Activated CD8-positive, alpha-beta memory T cell treated with anti-CD3 and anti-CD28 coated beads, Interleukin-2, amount 10 ng/mL, durations not matched to agents 7 days and 5 days (primary cell): ENCODE measurements at regions of chr17 and their contacts with region 1.

Region 1: DNA sequence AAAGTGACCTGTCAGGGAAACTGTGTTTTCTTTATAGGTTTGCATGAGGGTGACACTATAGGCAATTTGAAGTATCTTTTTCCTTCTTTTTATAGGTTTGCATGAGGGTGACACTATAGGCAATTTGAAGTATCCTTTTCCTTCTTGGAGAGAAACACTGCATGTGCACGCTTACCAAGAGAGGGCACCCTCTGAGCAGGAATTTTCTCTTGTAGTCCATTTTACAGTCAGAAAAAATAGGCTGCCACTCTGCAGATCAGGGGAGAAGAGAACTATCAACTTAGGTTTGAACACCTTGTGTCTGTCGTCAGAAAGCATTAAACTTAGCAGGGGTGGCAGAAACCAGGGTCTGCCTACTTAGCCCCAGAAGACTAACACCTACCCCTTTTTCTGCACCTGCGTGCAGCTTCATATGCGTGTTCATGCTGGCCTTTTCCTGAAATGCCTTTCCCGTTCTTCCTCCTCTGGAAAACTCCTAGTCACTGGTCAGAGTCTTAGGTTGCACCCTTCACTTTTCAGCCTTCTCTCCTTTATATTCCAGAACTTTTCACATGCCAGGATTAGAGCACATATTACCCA is 16.4 kb upstream of the SMIM36 start:
- DNase-seq: no peak
- ATAC-seq: no peak
- H3K4me3 Mint-ChIP-seq: no peak overlapping the region
- H3K27ac Mint-ChIP-seq: no peak overlapping the region
- H3K4me1 Mint-ChIP-seq: peaks cover 16% of the 10 kb centered on the region
- H3K27me3 Mint-ChIP-seq: peaks cover 27% of the 10 kb centered on the region

Region 2: DNA sequence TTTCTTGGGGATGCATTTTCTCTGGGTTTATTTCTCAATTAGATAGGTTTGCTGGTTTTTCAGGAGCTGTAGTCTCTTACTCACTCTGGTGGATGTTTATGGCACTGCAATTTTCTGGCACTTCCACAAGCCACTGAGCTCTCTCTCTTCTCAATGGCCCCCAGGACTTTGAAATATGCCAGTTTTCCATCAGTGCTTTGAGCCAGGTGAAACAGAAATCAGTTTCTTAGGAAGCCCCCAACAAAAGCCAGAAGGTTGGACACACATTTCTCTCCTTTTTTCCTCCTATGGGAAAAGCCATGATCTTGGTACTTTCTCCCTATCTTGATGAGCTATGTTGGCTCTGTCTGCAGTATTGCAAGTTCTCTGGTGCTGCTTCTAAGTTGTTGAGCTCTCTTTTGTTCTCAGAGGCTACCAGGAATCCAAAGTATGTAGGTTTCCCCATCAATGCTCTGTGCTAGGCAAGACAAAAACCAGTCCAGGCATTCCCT is 74.3 kb after region 1 on chr17:
- CTCF ChIA-PET with region 1: interaction called, 22 read pairs
- DNase-seq: no peak
- ATAC-seq: no peak
- H3K4me3 Mint-ChIP-seq: no peak overlapping the region
- H3K27ac Mint-ChIP-seq: no peak overlapping the region
- H3K4me1 Mint-ChIP-seq: no peaks in the 10 kb centered on the region
- H3K27me3 Mint-ChIP-seq: peaks cover 29% of the 10 kb centered on the region

Region 3: GRCh38 chr17:55717898-55718735 is 190.5 kb after region 1 on chr17:
- CTCF ChIA-PET with region 1: interaction called, 28 read pairs
- DNase-seq: peak; percentile 71
- ATAC-seq: no peak
- H3K4me3 Mint-ChIP-seq: no peak overlapping the region
- H3K27ac Mint-ChIP-seq: no peak overlapping the region
- H3K4me1 Mint-ChIP-seq: no peaks in the 10 kb centered on the region
- H3K27me3 Mint-ChIP-seq: peaks cover 30% of the 10 kb centered on the region

Region 4: DNA sequence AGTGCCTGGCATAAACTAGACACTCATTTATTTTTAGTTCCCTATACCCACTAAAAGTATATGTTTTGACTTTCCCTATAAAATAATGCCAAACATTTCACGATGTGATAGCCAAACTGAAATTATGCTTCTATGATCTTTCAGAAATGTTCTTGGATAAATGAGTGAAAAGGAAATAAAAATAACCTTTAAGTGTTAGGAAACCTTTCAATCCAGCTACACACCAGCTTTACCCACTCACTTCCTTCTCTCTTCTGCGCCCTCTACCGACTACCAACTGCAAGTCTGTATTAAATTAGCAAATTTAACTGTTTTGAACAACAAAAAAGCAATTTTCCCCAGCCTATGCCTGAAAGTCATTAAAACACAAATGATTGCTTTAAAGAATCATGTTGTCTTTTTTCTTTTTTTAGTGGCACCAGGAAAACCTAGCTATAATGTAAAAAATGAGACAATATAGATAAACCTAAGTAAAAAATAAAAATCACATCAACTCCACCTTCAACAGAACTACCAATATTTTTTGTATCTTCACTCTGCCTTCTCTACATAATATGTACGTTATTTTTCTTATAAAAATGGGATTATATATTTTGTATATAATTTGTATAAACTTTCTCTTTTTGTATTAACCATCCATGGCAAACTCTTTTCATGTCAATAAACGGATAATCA is 208.2 kb after region 1 on chr17:
- CTCF ChIA-PET with region 1: interaction called, 11 read pairs
- DNase-seq: peak; percentile 54
- ATAC-seq: no peak
- H3K4me3 Mint-ChIP-seq: no peak overlapping the region
- H3K27ac Mint-ChIP-seq: no peak overlapping the region
- H3K4me1 Mint-ChIP-seq: peaks cover 13% of the 10 kb centered on the region
- H3K27me3 Mint-ChIP-seq: peaks cover 41% of the 10 kb centered on the region

Region 5: GRCh38 chr17:55770148-55770870 is 242.7 kb after region 1 on chr17:
- CTCF ChIA-PET with region 1: interaction called, 11 read pairs
- DNase-seq: no peak
- ATAC-seq: no peak
- H3K4me3 Mint-ChIP-seq: no peak overlapping the region
- H3K27ac Mint-ChIP-seq: no peak overlapping the region
- H3K4me1 Mint-ChIP-seq: no peaks in the 10 kb centered on the region
- H3K27me3 Mint-ChIP-seq: no peaks in the 10 kb centered on the region